Sciatic nerve (tissue), 2 donors: ENCODE measurements at regions of chr9 and their contacts with region 1.

Region 1: DNA sequence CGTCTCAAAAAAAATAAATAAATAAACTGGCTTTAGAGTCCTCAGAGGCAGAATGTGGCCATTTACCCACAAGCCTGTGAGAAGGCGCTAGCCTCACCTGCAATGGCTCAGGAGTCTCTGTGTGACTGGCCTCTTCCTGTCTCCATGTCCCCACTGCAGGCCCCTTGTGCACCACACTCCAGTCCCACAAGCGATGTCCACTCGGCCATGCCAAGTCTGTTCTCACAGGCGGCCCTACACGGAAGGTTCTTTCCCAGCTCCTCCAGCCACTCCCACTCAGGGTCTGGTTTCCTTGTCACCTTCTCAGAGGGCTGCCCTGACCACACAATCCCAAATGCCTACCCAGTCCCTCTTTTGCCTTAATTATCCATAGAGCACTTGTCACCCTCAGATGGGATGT is 38.2 kb downstream of the POLR1E start:
- DNase-seq: no peak
- ATAC-seq: no peak

Region 2: GRCh38 chr9:37508834-37509206 is 15.1 kb before region 1 on chr9:
- intact Hi-C with region 1: loop called (anchors 2 kb)
- DNase-seq: no peak
- ATAC-seq: no peak

Region 3: GRCh38 chr9:37582548-37583157 is 58.7 kb after region 1 on chr9:
- intact Hi-C with region 1: no loop called
- DNase-seq: no peak
- ATAC-seq: no peak